MCF 10A (cell line): ENCODE measurements at regions of chr1 and their contacts with region 1.

Region 1: GRCh38 chr1:208807446-208808127 is 563.4 kb upstream of the PLXNA2 start:
- DNase-seq: peak; percentile 96
- H3K4me3 Mint-ChIP-seq: no peak overlapping the region
- H3K27ac Mint-ChIP-seq: peak overlapping the region; percentile 91
- H3K4me1 Mint-ChIP-seq: peaks cover 37% of the 10 kb centered on the region
- H3K27me3 Mint-ChIP-seq: no peaks in the 10 kb centered on the region
- CTCF ChIP-seq: no peak

Region 2: DNA sequence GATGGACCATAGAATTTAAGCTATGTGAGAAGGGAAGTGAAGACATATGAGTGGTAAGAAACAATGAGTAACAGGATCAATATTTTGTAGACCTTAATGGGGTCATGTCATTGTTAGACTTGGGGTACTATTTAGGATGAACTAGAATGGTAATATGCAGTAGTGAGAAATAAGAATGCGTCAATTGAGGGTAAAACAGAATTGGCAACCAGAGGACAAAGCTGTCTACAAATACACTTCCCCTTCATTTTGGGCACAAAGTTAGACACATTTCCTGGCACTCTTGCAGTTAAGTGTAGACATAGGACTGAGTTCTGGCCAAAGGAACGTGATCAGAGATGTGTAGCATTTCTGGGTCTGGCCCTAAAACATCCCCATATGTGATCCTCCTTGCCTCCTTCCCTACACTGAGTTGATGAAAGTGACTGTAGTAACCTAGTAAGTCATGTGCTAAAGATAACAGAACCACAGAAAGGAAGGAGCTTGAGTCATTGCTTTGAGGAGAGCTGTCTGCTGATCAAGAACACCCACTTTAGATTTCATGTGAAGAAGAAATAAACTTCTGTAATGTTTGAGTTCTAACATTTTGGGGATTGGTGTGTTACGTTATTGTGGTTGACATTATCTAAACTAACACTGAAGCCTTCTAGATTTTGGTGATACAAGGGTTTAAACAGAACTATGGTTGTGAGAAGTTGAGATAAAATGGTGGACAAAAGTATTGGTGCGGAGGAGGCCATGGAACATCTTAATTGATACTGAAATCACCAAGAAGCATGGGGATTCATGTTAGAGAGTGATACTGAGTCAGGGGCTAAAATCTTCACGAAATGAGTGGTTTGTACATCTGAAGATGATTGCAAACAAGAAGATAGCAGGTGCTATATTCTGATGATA is 1444.4 kb before region 1 on chr1:
- CTCF ChIA-PET with region 1: no interaction called
- POLR2A ChIA-PET with region 1: no interaction called
- intact Hi-C with region 1: no loop called
- DNase-seq: no peak
- H3K4me3 Mint-ChIP-seq: no peak overlapping the region
- H3K27ac Mint-ChIP-seq: no peak overlapping the region
- H3K4me1 Mint-ChIP-seq: no peaks in the 10 kb centered on the region
- H3K27me3 Mint-ChIP-seq: no peaks in the 10 kb centered on the region
- CTCF ChIP-seq: no peak

Region 3: GRCh38 chr1:208829595-208829994 is 22.0 kb after region 1 on chr1:
- CTCF ChIA-PET with region 1: interaction called, 3 read pairs
- POLR2A ChIA-PET with region 1: interaction called, 10 read pairs
- intact Hi-C with region 1: no loop called
- DNase-seq: no peak
- H3K4me3 Mint-ChIP-seq: no peak overlapping the region
- H3K27ac Mint-ChIP-seq: no peak overlapping the region
- H3K4me1 Mint-ChIP-seq: no peaks in the 10 kb centered on the region
- H3K27me3 Mint-ChIP-seq: no peaks in the 10 kb centered on the region
- CTCF ChIP-seq: no peak

Region 4: GRCh38 chr1:208919371-208919770 is 111.8 kb after region 1 on chr1:
- CTCF ChIA-PET with region 1: no interaction called
- POLR2A ChIA-PET with region 1: interaction called, 5 read pairs
- intact Hi-C with region 1: loop called (anchors 5 kb)
- DNase-seq: peak; percentile 52
- H3K4me3 Mint-ChIP-seq: no peak overlapping the region
- H3K27ac Mint-ChIP-seq: peak overlapping the region; percentile 86
- H3K4me1 Mint-ChIP-seq: peaks cover 32% of the 10 kb centered on the region
- H3K27me3 Mint-ChIP-seq: no peaks in the 10 kb centered on the region
- CTCF ChIP-seq: no peak

Region 5: DNA sequence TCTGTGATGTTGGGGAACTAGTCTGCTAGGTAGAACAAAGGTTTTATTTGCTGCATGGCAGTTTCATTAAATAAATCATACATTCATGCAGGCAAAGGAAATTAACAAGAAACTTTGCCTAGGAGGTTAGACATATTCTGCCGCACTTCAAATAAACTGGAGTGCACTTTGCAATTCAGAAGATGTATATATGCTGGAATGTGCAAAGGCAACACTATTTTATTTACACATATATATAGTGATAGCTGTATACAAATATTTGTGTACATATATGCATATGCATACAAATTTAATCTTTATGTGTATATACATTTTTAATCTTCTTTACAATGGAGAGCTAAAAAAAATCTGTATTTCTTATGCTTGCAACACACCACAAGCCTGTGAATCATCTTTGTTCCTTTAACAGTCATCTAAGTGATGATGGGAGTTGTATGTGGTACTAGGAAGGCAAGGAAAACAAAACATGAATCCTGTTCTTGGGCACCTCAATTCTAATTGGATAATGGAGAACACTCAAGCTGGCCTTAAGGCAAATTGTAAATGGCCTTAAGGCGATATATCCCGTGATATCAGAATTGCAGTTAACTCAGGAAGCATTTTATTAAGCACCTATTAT is 170.2 kb after region 1 on chr1:
- CTCF ChIA-PET with region 1: no interaction called
- POLR2A ChIA-PET with region 1: interaction called, 11 read pairs
- intact Hi-C with region 1: no loop called
- DNase-seq: peak; percentile 82
- H3K4me3 Mint-ChIP-seq: no peak overlapping the region
- H3K27ac Mint-ChIP-seq: peak overlapping the region; percentile 91
- H3K4me1 Mint-ChIP-seq: peaks cover 48% of the 10 kb centered on the region
- H3K27me3 Mint-ChIP-seq: no peaks in the 10 kb centered on the region
- CTCF ChIP-seq: no peak

Region 6: DNA sequence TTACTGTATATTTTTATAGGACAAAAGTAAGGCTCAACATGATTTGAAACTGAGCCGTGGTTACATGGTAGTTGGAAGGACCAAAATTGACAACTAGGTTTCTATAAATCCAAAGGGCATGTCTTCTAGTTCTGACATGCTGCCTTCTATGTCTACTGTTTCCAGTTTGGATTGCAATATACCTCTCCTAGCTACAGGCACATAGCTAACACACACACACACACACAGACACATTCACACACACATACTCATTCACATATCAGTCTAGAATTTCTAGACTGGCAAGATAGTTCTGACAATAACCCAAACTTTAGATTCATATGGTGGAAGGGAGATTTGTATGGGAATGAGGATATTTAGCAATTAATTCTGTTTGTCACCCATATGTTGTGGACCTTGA is 231.1 kb after region 1 on chr1:
- CTCF ChIA-PET with region 1: no interaction called
- POLR2A ChIA-PET with region 1: interaction called, 8 read pairs
- intact Hi-C with region 1: loop called (anchors 1 kb)
- DNase-seq: peak; percentile 49
- H3K4me3 Mint-ChIP-seq: no peak overlapping the region
- H3K27ac Mint-ChIP-seq: peak overlapping the region; percentile 1
- H3K4me1 Mint-ChIP-seq: peaks cover 21% of the 10 kb centered on the region
- H3K27me3 Mint-ChIP-seq: no peaks in the 10 kb centered on the region
- CTCF ChIP-seq: no peak